CD8-positive, alpha-beta T cell (primary cell): ENCODE measurements at regions of chr6 and their contacts with region 1.

Region 1: GRCh38 chr6:41936073-41936837 is 5.4 kb downstream of the CCND3 start:
- DNase-seq: peak; percentile 42 to 95 (median 71)
- ATAC-seq: peak; percentile 60
- H3K4me3 ChIP-seq: peak overlapping the region; percentile 9 to 13
- H3K4me3 Mint-ChIP-seq: peak overlapping the region; percentile 78
- H3K27ac ChIP-seq: peak overlapping the region; percentile 8 to 63
- H3K27ac Mint-ChIP-seq: peak overlapping the region; percentile 90
- H3K4me1 ChIP-seq: peaks cover 63% of the 10 kb centered on the region
- H3K4me1 Mint-ChIP-seq: peaks cover 72% of the 10 kb centered on the region
- H3K27me3 ChIP-seq: no peaks in the 10 kb centered on the region
- H3K27me3 Mint-ChIP-seq: no peaks in the 10 kb centered on the region
- CTCF ChIP-seq: peak; percentile 66

Region 2: GRCh38 chr6:41846666-41847237 is 89.5 kb before region 1 on chr6:
- CTCF ChIA-PET with region 1: interaction called, 3 read pairs
- POLR2A ChIA-PET with region 1: no interaction called
- intact Hi-C with region 1: loop called in 1 of 2 experiments (anchors 5 kb)
- DNase-seq: peak; percentile 16 to 74 (median 53)
- ATAC-seq: peak; percentile 81
- H3K4me3 ChIP-seq: no peak overlapping the region
- H3K4me3 Mint-ChIP-seq: no peak overlapping the region
- H3K27ac ChIP-seq: no peak overlapping the region
- H3K27ac Mint-ChIP-seq: no peak overlapping the region
- H3K4me1 ChIP-seq: no peaks in the 10 kb centered on the region
- H3K4me1 Mint-ChIP-seq: peaks cover 3% of the 10 kb centered on the region
- H3K27me3 ChIP-seq: no peaks in the 10 kb centered on the region
- H3K27me3 Mint-ChIP-seq: no peaks in the 10 kb centered on the region
- CTCF ChIP-seq: peak; percentile 77

Region 3: GRCh38 chr6:41901882-41902519 is 34.3 kb before region 1 on chr6:
- CTCF ChIA-PET with region 1: interaction called, 9 read pairs
- POLR2A ChIA-PET with region 1: no interaction called
- intact Hi-C with region 1: loop called in 1 of 2 experiments (anchors 2 kb)
- DNase-seq: peak; percentile 25 to 81 (median 59)
- ATAC-seq: peak; percentile 71
- H3K4me3 ChIP-seq: no peak overlapping the region
- H3K4me3 Mint-ChIP-seq: no peak overlapping the region
- H3K27ac ChIP-seq: no peak overlapping the region
- H3K27ac Mint-ChIP-seq: no peak overlapping the region
- H3K4me1 ChIP-seq: peaks cover 11% of the 10 kb centered on the region
- H3K4me1 Mint-ChIP-seq: peaks cover 19% of the 10 kb centered on the region
- H3K27me3 ChIP-seq: no peaks in the 10 kb centered on the region
- H3K27me3 Mint-ChIP-seq: no peaks in the 10 kb centered on the region
- CTCF ChIP-seq: peak; percentile 42

Region 4: GRCh38 chr6:41976794-41977484 is 40.7 kb after region 1 on chr6:
- CTCF ChIA-PET with region 1: interaction called, 4 read pairs
- POLR2A ChIA-PET with region 1: no interaction called
- intact Hi-C with region 1: loop called in 1 of 2 experiments (anchors 5 kb)
- DNase-seq: no peak
- ATAC-seq: peak; percentile 43
- H3K4me3 ChIP-seq: no peak overlapping the region
- H3K4me3 Mint-ChIP-seq: peak overlapping the region; percentile 8
- H3K27ac ChIP-seq: no peak overlapping the region
- H3K27ac Mint-ChIP-seq: peak overlapping the region; percentile 90
- H3K4me1 ChIP-seq: peaks cover 81% of the 10 kb centered on the region
- H3K4me1 Mint-ChIP-seq: peaks cover 69% of the 10 kb centered on the region
- H3K27me3 ChIP-seq: no peaks in the 10 kb centered on the region
- H3K27me3 Mint-ChIP-seq: no peaks in the 10 kb centered on the region
- CTCF ChIP-seq: no peak

Region 5: DNA sequence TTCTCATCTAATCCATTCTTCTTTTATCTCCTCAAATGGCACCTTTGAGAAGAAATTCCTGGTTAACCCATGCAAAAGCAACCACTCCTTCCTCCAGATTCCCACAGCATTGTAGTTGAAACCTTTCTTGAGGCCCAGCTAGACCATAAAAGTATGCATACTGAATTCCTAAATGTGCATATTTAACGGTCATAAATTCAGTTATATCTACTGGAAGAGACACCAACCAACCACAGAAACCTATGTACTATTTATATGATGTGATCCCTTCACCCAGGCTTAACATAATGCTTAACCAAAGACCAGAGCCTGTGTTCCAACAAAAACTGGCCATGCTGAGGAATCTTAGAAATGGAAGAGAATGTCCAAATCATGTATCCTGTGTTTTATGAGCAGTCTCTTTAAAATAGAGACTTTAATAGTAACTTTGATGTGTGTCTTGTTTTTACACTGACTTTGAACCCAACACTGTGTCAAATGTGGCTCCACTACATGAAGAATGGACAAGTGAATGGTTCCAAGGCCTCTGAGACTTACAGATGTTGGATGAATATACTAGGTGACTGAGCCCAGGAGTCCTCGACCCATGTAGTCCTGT is 102.7 kb after region 1 on chr6:
- CTCF ChIA-PET with region 1: interaction called, 184 read pairs
- POLR2A ChIA-PET with region 1: interaction called, 58 read pairs
- intact Hi-C with region 1: loop called (anchors 1 kb)
- DNase-seq: no peak
- ATAC-seq: no peak
- H3K4me3 ChIP-seq: peak overlapping the region; percentile 34 to 52
- H3K4me3 Mint-ChIP-seq: peak overlapping the region; percentile 79
- H3K27ac ChIP-seq: peak overlapping the region; percentile 32 to 57
- H3K27ac Mint-ChIP-seq: peak overlapping the region; percentile 95
- H3K4me1 ChIP-seq: peaks cover 80% of the 10 kb centered on the region
- H3K4me1 Mint-ChIP-seq: peaks cover 75% of the 10 kb centered on the region
- H3K27me3 ChIP-seq: no peaks in the 10 kb centered on the region
- H3K27me3 Mint-ChIP-seq: no peaks in the 10 kb centered on the region
- CTCF ChIP-seq: no peak

Region 6: DNA sequence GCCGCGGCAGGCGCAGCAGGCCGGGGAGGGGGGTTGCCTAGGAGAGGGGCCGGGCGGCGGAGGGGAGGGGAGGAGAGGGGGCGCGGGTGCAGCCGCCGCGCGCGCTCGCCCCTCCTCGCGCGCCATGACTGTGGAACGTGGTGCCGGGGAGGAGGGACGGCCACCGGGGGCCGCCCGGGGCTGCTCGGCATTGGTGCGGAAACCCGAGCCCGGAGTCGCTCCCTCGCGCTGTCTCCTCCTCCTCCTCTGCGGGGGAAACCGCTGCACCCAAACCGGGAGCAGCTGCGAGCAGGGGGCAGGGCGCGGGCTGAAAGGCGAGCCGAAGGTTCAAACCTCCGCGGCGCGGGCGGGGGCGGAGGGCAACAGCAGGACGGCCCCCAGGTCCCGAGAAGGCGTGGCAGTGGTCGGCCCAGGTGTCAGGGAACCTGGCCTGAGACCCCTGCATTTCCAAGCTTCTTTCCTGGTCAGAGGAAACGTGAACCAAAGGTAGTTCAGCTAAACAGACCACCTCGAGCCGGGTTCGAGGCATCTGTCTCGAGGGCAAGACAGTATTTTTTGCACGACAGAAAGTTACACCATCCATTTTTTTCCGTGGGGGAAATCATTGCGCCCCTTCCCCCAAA is 516.9 kb after region 1 on chr6:
- CTCF ChIA-PET with region 1: no interaction called
- POLR2A ChIA-PET with region 1: no interaction called
- intact Hi-C with region 1: no loop called
- DNase-seq: peak; percentile 42 to 90 (median 76)
- ATAC-seq: peak; percentile 74
- H3K4me3 ChIP-seq: peak overlapping the region; percentile 82 to 98
- H3K4me3 Mint-ChIP-seq: peak overlapping the region; percentile 100
- H3K27ac ChIP-seq: peak overlapping the region in 1 of 2 experiments; percentile 72
- H3K27ac Mint-ChIP-seq: no peak overlapping the region
- H3K4me1 ChIP-seq: peaks cover 29% of the 10 kb centered on the region
- H3K4me1 Mint-ChIP-seq: peaks cover 33% of the 10 kb centered on the region
- H3K27me3 ChIP-seq: no peaks in the 10 kb centered on the region
- H3K27me3 Mint-ChIP-seq: no peaks in the 10 kb centered on the region
- CTCF ChIP-seq: no peak

Region 7: GRCh38 chr6:43817192-43817591 is 1880.9 kb after region 1 on chr6:
- CTCF ChIA-PET with region 1: no interaction called
- POLR2A ChIA-PET with region 1: no interaction called
- intact Hi-C with region 1: no loop called
- DNase-seq: peak in 3 of 9 experiments; percentile 8 to 41 (median 26)
- ATAC-seq: peak; percentile 40
- H3K4me3 ChIP-seq: no peak overlapping the region
- H3K4me3 Mint-ChIP-seq: no peak overlapping the region
- H3K27ac ChIP-seq: no peak overlapping the region
- H3K27ac Mint-ChIP-seq: no peak overlapping the region
- H3K4me1 ChIP-seq: peaks cover 13% of the 10 kb centered on the region
- H3K4me1 Mint-ChIP-seq: peaks cover 6% of the 10 kb centered on the region
- H3K27me3 ChIP-seq: no peaks in the 10 kb centered on the region
- H3K27me3 Mint-ChIP-seq: peaks cover 11% of the 10 kb centered on the region
- CTCF ChIP-seq: no peak